Brain microvascular endothelial cell (primary cell): ENCODE measurements at regions of chr10 and their contacts with region 1.

Region 1: GRCh38 chr10:103712570-103713498 is 142.5 kb downstream of the SH3PXD2A start:
- DNase-seq: peak; percentile 79
- H3K4me3 ChIP-seq: no peak overlapping the region
- H3K27ac ChIP-seq: no peak overlapping the region
- H3K27me3 ChIP-seq: no peaks in the 10 kb centered on the region
- CTCF ChIP-seq: peak; percentile 85

Region 2: GRCh38 chr10:103859161-103860086 is 146.6 kb after region 1 on chr10:
- in situ Hi-C with region 1: loop called (anchors 25 kb)
- DNase-seq: peak; percentile 59
- H3K4me3 ChIP-seq: no peak overlapping the region
- H3K27ac ChIP-seq: no peak overlapping the region
- H3K27me3 ChIP-seq: no peaks in the 10 kb centered on the region
- CTCF ChIP-seq: peak; percentile 76

Region 3: GRCh38 chr10:103918053-103918846 is 205.4 kb after region 1 on chr10 and contains the start of gene STN1:
- in situ Hi-C with region 1: no loop called
- DNase-seq: peak; percentile 96
- H3K4me3 ChIP-seq: peak within 1 kb of the TSS; percentile 79
- H3K27ac ChIP-seq: peak within 1 kb of the TSS; percentile 94
- H3K27me3 ChIP-seq: no peaks in the 10 kb centered on the region
- CTCF ChIP-seq: peak; percentile 21

Region 4: DNA sequence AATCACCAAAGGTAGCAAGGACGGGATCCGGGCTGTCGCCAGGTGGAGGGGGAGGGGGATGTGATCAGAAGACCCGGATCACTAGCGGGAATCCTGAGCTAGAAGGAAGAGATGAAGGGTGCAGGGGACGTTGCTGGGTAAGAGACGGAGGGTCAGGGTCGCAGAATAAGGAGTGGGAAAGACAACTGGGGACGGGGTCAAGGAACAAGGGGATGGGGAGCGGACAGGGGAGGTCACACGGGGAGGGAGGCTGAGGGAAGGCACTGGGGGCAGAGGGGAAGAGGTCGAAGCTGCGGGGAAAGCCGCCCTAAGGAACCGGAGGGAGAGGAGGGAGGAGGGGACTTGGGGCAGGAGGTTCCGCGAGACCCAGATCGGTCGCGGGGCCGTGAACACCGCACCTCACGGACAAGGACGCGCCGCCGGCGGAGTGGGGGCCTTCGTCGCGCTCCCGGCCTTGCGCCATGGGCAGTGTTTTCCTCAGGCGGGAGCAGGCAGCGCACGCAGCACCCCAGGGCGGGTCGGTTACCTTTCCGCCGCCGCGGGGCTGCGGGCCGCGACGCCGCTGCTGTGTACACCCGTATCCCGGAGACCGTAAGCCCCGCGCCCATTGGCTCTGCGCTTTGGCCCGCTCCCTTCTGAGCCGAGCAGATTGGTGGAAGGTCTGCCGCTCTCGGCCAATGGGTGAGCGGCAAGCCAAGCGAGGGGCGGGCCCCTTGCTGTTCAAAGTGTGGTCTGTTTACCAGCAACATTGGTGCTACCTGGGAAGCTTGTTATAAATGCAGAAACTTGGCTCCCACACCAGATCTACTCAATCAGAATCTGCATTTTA is 519.2 kb after region 1 on chr10 and contains the start of gene CFAP43:
- in situ Hi-C with region 1: no loop called
- DNase-seq: peak; percentile 98
- H3K4me3 ChIP-seq: peak within 1 kb of the TSS; percentile 92
- H3K27ac ChIP-seq: peak within 1 kb of the TSS; percentile 58
- H3K27me3 ChIP-seq: peaks cover 2% of the 10 kb centered on the region
- CTCF ChIP-seq: no peak